ENCODE measurements at regions of chr11 and their contacts with region 1.

Region 1: DNA sequence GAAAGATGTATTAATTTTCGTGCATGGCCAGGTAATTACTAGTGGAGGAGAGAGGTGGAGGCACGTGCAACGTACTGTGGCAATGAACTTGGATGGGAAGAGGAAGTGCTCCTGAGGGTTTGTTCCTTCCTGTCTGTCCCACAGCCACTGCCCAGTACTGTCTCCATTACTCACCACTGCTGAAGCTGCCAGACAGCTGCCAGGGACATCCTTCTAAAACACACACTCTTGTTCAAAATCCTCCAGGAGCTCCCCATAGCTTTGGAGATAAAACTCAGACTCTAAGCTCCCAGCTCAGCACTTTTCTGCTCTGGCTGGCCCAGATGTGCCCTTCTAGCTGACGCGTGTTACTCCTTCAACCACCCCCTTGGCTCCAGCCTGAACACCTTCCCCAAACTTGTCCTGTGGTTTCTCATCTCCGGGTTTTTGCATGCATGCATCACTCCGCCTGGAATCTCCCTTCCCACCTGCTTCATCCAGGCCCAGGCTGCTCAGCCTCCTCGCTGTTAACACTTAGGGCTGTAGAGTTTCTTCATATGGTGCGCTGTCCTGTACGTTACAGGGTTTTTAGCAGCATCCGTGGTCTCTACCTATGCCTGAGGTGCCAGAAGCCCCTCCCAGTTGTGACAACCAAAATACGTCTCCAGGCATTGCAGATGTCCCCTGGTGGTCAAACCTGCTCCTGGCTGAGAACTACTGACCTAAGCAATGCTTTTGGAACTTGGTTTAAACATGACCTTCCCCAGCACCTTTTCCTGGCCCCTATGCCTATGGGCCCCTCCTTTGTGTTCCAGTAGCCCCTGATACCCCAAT is 69.5 kb downstream of the C11orf91 start:
- DNase-seq: no peak
- ATAC-seq: no peak; the same call in 1 of the 2 replicates
- H3K4me3 ChIP-seq: no peak overlapping the region
- H3K27ac ChIP-seq: no peak overlapping the region
- H3K4me1 ChIP-seq: 0 out of 2 replicates have a peak, but pooled peaks cover 3% of the 10 kb centered on the region
- H3K27me3 ChIP-seq: no peaks in the 10 kb centered on the region
- CTCF ChIP-seq: peak; percentile 19; the same call in 1 of the 2 replicates

Region 2: DNA sequence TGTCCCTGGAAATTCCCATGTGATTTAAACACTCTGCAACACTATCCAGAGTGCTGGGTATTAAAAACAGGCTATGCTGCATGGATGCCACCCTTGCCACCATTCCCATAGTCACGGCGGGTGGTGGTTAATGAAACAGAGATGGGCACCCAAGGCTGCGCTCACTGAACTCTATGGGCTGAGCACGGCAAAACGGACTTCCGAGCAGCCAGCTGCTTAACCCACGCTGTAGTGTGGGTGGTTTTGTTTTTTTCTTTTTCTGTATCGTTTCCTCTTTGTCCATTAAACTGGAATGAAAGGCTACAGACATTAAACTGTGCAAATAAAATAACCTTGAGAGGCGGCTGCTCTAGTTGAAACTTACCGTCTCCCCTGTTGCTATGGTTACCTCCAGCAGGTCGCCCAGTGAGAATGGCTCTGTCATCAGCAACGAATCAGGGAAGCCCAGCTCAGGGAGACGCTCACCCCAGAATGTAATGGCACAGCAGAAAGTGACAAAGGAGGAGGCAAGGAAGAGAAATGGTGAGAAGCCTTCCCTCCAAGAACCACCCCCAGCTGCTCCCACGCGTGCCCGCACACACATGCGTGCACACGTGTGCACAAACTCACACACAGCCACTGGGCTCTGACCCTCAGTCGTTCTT is 32.6 kb before region 1 on chr11:
- CTCF ChIA-PET with region 1: interaction called, 15 read pairs
- POLR2A ChIA-PET with region 1: no interaction called
- in situ Hi-C with region 1: no loop called
- intact Hi-C with region 1: no loop called
- DNase-seq: no peak
- ATAC-seq: no peak
- H3K4me3 ChIP-seq: no peak overlapping the region
- H3K27ac ChIP-seq: no peak overlapping the region
- H3K4me1 ChIP-seq: no peaks in the 10 kb centered on the region
- H3K27me3 ChIP-seq: no peaks in the 10 kb centered on the region
- CTCF ChIP-seq: no peak